Activated CD8-positive, alpha-beta T cell treated with anti-CD3 and anti-CD28 coated beads, Interleukin-2, amount 10 ng/mL, durations not matched to agents 7 days and 5 days (primary cell): ENCODE measurements at regions of chr1 and their contacts with region 1.

Region 1: DNA sequence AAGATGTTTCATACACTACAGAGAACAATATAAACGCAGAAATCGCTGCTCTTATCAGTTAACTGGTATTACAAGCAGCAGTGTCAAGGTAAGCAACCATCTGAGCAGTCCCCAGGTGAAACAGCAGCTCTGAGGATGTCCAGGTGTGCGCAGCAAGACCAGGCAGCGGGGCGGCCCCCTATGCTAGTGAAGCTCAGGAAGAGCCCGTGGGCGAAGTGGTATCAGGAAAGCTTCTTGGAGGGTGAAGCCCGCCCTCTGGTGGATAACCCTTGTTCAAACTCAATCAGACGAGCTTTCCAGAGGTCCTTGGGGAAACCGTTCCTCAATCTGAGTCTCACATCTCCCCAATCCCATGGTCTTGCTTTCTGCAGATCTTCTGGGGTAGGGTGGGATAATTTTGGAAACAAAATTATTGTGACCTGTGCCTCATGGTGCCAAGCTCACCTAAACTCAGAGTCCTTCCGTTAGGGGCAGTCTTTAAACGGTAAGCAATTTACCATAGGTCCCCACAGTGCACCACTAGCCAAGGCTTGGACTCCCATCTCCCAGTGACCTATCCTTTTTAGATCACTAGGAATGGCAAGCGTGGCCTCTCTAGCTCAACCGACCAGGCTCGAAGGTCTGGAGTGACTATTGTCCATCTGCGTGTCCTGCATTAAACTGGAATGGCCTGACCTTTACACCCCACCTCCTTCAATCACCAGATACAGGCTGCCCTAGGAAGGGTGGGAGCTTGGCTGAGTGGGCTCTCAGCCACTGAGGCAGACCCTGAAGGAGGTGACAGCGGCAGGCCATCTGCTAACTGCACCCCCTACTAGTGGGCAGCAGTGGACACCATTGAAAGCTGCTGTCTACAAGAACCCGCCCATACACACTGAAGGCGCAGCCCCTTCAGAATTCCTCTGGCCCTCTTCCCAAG is 13.6 kb upstream of the FAM110D start:
- DNase-seq: peak; percentile 86
- ATAC-seq: peak; percentile 95
- H3K4me3 Mint-ChIP-seq: no peak overlapping the region
- H3K27ac Mint-ChIP-seq: no peak overlapping the region
- H3K4me1 Mint-ChIP-seq: peaks cover 7% of the 10 kb centered on the region
- H3K27me3 Mint-ChIP-seq: peaks cover 23% of the 10 kb centered on the region

Region 2: GRCh38 chr1:26035959-26036755 is 109.1 kb before region 1 on chr1:
- CTCF ChIA-PET with region 1: interaction called, 40 read pairs
- POLR2A ChIA-PET with region 1: no interaction called
- DNase-seq: peak; percentile 81
- ATAC-seq: peak; percentile 77
- H3K4me3 Mint-ChIP-seq: peak overlapping the region; percentile 91
- H3K27ac Mint-ChIP-seq: no peak overlapping the region
- H3K4me1 Mint-ChIP-seq: peaks cover 16% of the 10 kb centered on the region
- H3K27me3 Mint-ChIP-seq: peaks cover 21% of the 10 kb centered on the region

Region 3: GRCh38 chr1:26111530-26112406 is 33.5 kb before region 1 on chr1 and contains the start of gene PDIK1L:
- CTCF ChIA-PET with region 1: interaction called, 356 read pairs
- POLR2A ChIA-PET with region 1: interaction called, 16 read pairs
- DNase-seq: peak; percentile 95
- ATAC-seq: peak; percentile 86
- H3K4me3 Mint-ChIP-seq: peak within 1 kb of the TSS; percentile 95
- H3K27ac Mint-ChIP-seq: peak within 1 kb of the TSS; percentile 91
- H3K4me1 Mint-ChIP-seq: peaks cover 30% of the 10 kb centered on the region
- H3K27me3 Mint-ChIP-seq: no peaks in the 10 kb centered on the region
- total RNA-seq, gene PDIK1L: 21.3 to 25.4 TPM

Region 4: DNA sequence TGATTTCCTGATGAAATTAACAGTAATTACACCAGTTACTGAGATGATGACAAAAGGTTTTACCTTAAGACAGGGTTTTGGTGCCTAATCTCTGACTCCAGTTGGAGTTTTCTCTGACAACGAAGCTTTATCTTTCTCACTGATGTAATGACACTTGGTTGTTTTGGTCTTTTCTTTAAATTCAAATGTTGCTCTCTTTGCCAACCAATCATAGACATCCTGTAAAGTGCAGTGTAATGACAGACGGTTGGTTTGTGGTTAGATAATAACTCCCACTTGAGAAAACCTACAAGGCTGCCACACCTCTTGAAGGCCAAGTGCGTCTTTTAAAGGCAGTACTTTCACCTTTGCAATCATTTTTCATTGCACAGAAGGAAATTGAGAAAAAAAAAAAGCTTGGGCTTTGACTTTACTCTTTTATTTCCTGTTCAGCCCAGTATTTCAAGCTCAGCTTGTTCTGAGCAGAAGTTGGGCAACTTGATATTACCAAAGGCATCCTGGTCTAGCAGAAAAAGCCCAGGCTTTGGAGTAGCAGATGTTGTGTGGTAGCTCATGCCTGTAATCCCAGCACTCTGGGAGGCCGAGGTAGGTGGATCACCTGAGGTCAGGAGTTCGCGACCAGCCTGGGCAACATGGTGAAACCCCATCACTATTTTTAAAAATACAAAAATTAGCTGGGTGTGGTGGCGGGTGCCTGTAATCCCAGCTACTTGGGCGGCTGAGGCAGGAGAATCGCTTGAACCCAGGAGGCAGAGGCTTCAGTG is 18.8 kb before region 1 on chr1:
- CTCF ChIA-PET with region 1: interaction called, 317 read pairs
- POLR2A ChIA-PET with region 1: interaction called, 52 read pairs
- DNase-seq: peak; percentile 83
- ATAC-seq: peak; percentile 98
- H3K4me3 Mint-ChIP-seq: peak overlapping the region; percentile 76
- H3K27ac Mint-ChIP-seq: peak overlapping the region; percentile 94
- H3K4me1 Mint-ChIP-seq: peaks cover 66% of the 10 kb centered on the region
- H3K27me3 Mint-ChIP-seq: no peaks in the 10 kb centered on the region

Region 5: GRCh38 chr1:26156704-26157038 is 11.4 kb after region 1 on chr1:
- CTCF ChIA-PET with region 1: interaction called, 43 read pairs
- POLR2A ChIA-PET with region 1: no interaction called
- DNase-seq: no peak
- ATAC-seq: no peak
- H3K4me3 Mint-ChIP-seq: no peak overlapping the region
- H3K27ac Mint-ChIP-seq: no peak overlapping the region
- H3K4me1 Mint-ChIP-seq: peaks cover 7% of the 10 kb centered on the region
- H3K27me3 Mint-ChIP-seq: peaks cover 31% of the 10 kb centered on the region

Region 6: DNA sequence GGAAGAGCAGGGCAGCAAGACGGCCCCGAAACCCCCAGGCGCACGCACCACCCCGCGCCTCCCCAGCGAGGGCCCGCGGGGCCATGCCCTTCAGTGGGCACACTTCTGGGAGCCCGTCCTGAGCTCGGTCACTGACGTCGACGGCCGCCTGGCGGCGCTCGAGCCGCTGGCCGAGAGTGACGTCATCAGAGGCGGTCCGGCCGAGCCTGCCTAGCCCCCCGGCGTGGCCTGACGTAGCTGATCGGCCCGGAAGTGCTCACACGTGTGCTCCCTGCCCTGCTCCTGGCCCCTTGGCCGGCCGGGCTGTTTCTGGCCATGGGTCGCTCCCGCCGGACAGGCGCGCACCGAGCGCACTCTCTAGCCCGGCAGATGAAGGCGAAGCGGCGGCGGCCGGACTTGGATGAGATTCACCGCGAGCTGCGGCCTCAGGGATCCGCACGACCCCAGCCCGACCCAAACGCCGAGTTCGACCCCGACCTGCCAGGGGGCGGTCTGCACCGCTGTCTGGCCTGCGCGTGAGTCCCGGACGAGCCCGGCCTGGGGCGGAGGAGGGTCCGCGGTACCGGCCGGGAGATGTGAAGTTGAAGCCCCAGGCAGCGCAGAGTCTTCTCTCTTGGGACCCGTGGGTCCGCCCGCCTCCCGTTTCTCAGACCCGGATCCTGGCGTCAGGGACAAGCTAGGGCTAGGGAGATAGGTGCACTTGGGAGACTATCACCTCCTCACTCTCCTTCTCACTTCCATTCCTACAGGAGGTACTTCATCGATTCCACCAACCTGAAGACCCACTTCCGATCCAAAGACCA is 24.6 kb after region 1 on chr1 and contains the start of gene ZNF593:
- CTCF ChIA-PET with region 1: interaction called, 14 read pairs
- POLR2A ChIA-PET with region 1: no interaction called
- DNase-seq: peak; percentile 92
- ATAC-seq: peak; percentile 95
- H3K4me3 Mint-ChIP-seq: peak within 1 kb of the TSS; percentile 89
- H3K27ac Mint-ChIP-seq: peak within 1 kb of the TSS; percentile 89
- H3K4me1 Mint-ChIP-seq: peaks cover 25% of the 10 kb centered on the region
- H3K27me3 Mint-ChIP-seq: peaks cover 9% of the 10 kb centered on the region
- total RNA-seq, gene ZNF593: 28.4 to 31.1 TPM

Region 7: GRCh38 chr1:26190373-26190987 is 45.2 kb after region 1 on chr1 and contains the start of gene CATSPER4:
- CTCF ChIA-PET with region 1: no interaction called
- POLR2A ChIA-PET with region 1: no interaction called
- DNase-seq: no peak
- ATAC-seq: no peak
- H3K4me3 Mint-ChIP-seq: no peak within 1 kb of the TSS
- H3K27ac Mint-ChIP-seq: peak within 1 kb of the TSS; percentile 70
- H3K4me1 Mint-ChIP-seq: peaks cover 6% of the 10 kb centered on the region
- H3K27me3 Mint-ChIP-seq: peaks cover 2% of the 10 kb centered on the region
- total RNA-seq, gene CATSPER4: not detected

Region 8: DNA sequence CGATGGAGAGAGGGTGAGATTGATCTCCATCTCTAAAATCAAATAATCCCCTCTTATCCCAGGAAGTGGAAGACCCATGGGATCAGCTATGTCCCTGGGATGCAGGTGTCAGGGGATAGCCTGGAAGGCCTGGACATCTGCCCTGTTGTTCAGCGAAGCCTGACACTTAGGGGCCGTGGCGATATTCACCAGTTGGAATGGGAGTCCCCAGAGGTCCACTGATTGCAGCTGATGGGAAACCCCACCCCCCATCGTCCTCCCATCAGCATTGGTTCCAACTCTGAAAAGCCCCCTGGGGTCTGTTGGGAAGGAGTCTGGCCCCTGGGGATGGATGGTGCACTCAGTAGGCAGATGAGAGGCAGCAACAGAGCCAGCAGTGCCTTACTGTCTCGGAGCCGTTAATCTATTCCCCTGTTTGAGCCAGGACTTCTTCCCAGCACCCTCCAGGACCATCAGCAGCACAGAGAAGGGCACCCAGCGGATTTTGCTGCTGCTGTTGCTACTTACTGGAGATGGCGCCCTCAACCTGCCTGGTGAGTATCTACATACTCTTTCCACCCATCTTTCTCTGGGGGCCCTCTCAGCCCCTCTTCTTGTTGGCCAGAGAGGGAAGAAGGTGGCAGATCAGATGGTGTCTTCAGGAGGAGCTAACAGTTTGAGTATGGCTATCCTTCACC is 58.5 kb after region 1 on chr1:
- CTCF ChIA-PET with region 1: no interaction called
- POLR2A ChIA-PET with region 1: no interaction called
- DNase-seq: no peak
- ATAC-seq: no peak
- H3K4me3 Mint-ChIP-seq: no peak overlapping the region
- H3K27ac Mint-ChIP-seq: no peak overlapping the region
- H3K4me1 Mint-ChIP-seq: peaks cover 37% of the 10 kb centered on the region
- H3K27me3 Mint-ChIP-seq: peaks cover 4% of the 10 kb centered on the region